Prostate gland (tissue), 2 donors: ENCODE measurements at regions of chr15 and their contacts with region 1.

Region 1: GRCh38 chr15:99928429-99928981 is 195.3 kb upstream of the LYSMD4 start:
- DNase-seq: peak; percentile 77
- H3K4me3 ChIP-seq: peak overlapping the region; percentile 5 to 33
- H3K27ac ChIP-seq: peak overlapping the region; percentile 23 to 70
- H3K4me1 ChIP-seq: peaks cover 3% of the 10 kb centered on the region
- H3K27me3 ChIP-seq: no peaks in the 10 kb centered on the region
- CTCF ChIP-seq: peak; percentile 50 to 82 (median 72)
- POLR2A ChIP-seq: no peak

Region 2: DNA sequence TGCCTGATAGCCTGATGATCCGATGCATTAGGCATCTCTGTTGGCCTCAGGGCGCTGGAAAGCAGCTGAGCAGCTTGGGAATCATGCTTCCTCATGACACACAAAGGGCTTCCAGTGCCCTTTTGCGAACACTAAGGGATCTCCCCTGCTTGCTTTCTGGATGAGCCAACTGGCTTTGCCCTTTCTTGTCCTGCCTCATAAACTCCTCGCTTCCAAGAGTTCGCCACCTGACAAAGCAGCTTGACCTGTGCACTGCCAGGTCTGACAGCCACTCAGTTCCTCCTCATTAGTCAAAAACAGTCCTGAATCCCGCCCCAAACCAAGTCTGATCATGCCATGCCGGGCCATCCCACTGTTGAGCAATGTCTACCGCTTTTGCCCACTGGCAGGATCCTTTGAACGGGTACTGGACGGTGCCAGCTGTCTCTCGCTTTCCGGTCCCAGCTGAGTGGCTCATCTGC is 70.2 kb after region 1 on chr15:
- intact Hi-C with region 1: no loop called
- DNase-seq: peak; percentile 74
- H3K4me3 ChIP-seq: no peak overlapping the region
- H3K27ac ChIP-seq: no peak overlapping the region
- H3K4me1 ChIP-seq: no peaks in the 10 kb centered on the region
- H3K27me3 ChIP-seq: no peaks in the 10 kb centered on the region
- CTCF ChIP-seq: no peak
- POLR2A ChIP-seq: no peak

Region 3: DNA sequence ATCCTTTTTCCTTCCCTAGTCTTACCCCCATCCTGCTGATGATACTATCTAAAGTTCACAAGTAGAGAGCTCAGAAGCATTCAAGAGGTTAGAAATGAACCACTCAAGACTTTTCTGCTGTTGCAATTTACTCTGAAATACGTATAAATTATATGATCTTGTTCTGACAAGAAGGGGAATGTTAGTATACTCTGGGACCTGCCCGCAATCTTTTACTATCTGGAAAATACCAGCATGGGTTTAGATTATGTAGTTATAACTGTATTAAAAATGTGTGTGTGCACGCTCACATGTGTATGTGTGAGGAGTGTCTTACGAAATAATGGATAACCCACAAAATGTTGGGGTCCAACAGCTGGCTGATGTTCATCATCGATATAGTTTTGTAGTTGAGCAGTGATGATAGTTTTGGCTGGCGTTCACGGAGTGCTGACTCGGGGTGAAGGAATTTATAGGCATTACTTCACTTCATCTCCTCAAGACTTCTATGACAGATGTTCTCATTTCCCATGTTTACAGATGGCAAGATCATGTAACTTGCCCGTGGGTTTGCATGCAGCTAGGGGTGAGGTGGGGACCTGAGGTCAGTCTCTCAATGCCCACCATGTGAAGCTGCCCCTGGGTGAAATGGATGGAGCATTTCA is 102.2 kb after region 1 on chr15:
- intact Hi-C with region 1: no loop called
- DNase-seq: no peak
- H3K4me3 ChIP-seq: no peak overlapping the region
- H3K27ac ChIP-seq: no peak overlapping the region
- H3K4me1 ChIP-seq: no peaks in the 10 kb centered on the region
- H3K27me3 ChIP-seq: no peaks in the 10 kb centered on the region
- CTCF ChIP-seq: no peak
- POLR2A ChIP-seq: no peak

Region 4: GRCh38 chr15:100053474-100054121 is 125.1 kb after region 1 on chr15:
- intact Hi-C with region 1: no loop called
- DNase-seq: no peak
- H3K4me3 ChIP-seq: no peak overlapping the region
- H3K27ac ChIP-seq: no peak overlapping the region
- H3K4me1 ChIP-seq: no peaks in the 10 kb centered on the region
- H3K27me3 ChIP-seq: no peaks in the 10 kb centered on the region
- CTCF ChIP-seq: no peak
- POLR2A ChIP-seq: no peak

Region 5: DNA sequence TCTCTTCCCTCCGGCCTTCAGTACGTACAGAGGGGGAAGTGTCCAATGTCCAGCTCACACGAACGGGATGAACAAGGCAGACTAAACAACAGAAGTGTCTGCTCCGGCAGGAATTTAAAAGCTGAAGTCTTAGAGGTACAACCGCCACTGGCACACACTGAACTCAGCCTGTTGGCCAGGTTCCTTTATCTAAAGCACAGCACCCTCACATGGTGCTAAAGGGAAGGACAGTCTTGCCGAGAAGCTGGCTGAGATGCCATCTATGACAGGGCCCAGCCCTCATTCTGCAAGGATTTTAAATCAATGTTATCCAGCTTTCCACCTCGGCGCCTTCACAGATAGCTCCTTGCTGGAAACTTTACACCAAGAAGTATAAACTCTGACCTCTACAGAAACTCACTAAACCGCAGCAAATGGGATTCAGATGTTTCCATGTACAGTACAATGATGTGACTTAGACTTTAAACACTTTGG is 410.5 kb after region 1 on chr15:
- intact Hi-C with region 1: loop called (anchors 2 kb)
- DNase-seq: peak; percentile 87
- H3K4me3 ChIP-seq: no peak overlapping the region
- H3K27ac ChIP-seq: no peak overlapping the region
- H3K4me1 ChIP-seq: no peaks in the 10 kb centered on the region
- H3K27me3 ChIP-seq: no peaks in the 10 kb centered on the region
- CTCF ChIP-seq: peak; percentile 42 to 92 (median 85)
- POLR2A ChIP-seq: no peak

Region 6: DNA sequence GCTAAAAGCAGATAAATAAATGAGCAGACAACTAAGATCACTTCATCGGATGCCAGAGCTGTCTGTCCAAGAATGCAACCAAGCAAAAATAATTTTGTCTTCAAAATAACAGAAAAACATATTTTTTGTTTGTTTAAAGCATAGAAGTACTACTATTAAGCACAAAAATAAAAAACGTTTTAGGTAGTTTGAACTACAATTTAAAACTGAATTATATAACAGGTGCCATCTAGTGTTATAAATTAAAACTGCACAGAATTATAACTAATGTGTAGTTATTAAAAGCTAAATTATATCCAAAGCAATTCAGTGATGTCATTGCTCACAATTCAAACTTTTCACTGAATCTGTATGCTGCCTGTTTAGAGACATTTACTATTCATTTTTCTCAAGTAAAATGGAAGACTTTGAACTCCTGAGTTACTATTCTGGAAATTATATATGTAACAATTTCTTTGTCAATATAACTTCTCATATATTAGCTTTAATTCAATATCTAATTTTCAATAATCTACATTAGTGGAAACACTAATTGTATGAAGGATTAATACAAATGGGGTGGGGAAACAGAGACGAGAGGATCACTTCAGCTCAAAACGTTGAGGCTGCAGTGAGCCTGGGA is 644.0 kb after region 1 on chr15:
- intact Hi-C with region 1: loop called (anchors 5 kb)
- DNase-seq: no peak
- H3K4me3 ChIP-seq: no peak overlapping the region
- H3K27ac ChIP-seq: no peak overlapping the region
- H3K4me1 ChIP-seq: no peaks in the 10 kb centered on the region
- H3K27me3 ChIP-seq: no peaks in the 10 kb centered on the region
- CTCF ChIP-seq: peak in 3 of 4 experiments; percentile 53 to 61 (median 56)
- POLR2A ChIP-seq: no peak